ENCODE measurements at regions of chr14 and their contacts with region 1.

Region 1: DNA sequence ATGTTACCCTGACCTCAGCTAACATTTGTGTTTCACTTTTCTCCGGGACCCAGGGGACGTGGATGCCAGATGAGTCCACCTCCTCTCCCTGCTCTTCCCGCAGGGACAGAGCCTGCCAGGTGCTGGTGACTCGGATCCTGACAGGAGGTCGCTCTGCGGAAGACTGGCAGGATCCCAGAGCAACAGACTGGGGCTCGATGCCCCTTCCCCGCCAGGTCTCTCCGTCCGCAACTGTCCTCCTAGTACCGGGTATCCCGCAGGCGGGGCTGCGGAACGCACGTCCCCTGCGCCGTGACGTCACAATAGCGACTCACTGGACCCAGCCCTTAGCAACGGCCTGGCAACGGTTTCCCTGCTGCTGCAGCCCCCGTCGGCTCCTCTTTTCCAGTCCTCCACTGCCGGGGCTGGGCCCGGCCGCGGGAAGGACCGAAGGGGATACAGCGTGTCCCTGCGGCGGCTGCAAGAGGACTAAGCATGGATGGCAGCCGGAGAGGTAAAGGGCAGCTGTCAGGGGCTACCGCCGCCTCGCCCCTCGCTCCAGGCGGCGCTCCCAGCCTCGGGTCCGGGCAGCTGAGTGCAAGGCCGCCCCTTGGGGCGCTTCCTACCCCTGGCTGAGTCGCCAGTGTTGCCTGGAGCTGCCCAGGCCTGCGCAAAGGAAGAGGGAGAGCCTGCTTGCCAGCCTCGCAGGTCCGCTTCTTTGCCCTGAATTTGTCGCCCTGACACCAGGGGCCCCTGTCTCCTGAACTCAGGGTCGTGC is at the start of gene SPATA7:
- DNase-seq: peak; percentile 97
- H3K4me3 ChIP-seq: peak within 1 kb of the TSS; percentile 43 to 93 (median 52)
- H3K27ac ChIP-seq: peak within 1 kb of the TSS; percentile 85 to 91 (median 87)
- H3K4me1 ChIP-seq: peaks cover 17 to 23% of the 10 kb centered on the region in 2 donors
- H3K27me3 ChIP-seq: no peaks in the 10 kb centered on the region
- CTCF ChIP-seq: peak in 1 of 6 experiments; percentile 24
- POLR2A ChIP-seq: peak; percentile 46 to 96
- total RNA-seq, gene SPATA7: 51.0 to 57.6 (median 52.2) TPM

Region 2: GRCh38 chr14:88289234-88289633 is 96.3 kb before region 1 on chr14:
- intact Hi-C with region 1: no loop called
- DNase-seq: no peak
- H3K4me3 ChIP-seq: no peak overlapping the region
- H3K27ac ChIP-seq: no peak overlapping the region
- H3K4me1 ChIP-seq: no peaks in the 10 kb centered on the region
- H3K27me3 ChIP-seq: no peaks in the 10 kb centered on the region
- CTCF ChIP-seq: no peak
- POLR2A ChIP-seq: no peak

Region 3: DNA sequence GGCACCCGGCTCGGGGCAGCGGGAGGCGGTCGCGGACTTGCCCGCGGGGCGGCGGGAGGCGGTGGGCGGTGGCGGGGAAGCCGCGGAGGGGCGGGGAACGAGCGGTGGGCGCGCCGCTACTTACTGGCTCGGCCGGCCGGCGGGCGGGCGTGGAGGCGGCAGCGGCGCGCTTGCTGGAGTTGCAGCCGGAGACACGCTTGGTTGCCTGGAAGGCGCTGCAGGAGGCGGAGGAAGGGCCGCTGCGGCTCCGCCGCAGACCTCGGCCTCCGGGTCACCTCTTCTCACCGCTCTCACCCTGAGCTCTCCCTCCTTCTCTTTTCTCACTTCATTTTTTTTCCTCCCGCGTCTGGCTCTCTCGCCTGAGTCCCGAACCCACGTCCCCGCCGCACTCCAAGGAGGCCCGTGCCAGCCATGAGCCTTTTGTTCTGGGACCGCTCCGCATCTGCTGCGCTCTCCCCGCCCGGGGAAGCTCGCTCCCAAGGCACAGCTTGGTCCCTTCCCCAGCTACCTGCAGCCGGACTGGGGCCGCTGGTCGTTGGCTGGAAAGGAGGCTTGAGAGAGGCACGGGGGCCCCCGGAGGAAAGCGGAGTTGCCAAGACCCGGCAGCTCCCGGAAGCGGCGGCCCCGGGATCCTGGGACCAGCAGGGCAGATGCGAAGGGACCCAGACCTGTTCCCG is 61.9 kb before region 1 on chr14:
- intact Hi-C with region 1: no loop called
- DNase-seq: peak; percentile 42 to 45
- H3K4me3 ChIP-seq: peak overlapping the region in 1 of 3 donors; percentile 21
- H3K27ac ChIP-seq: no peak overlapping the region
- H3K4me1 ChIP-seq: peaks cover 0 to 20% of the 10 kb centered on the region in 2 donors
- H3K27me3 ChIP-seq: no peaks in the 10 kb centered on the region
- CTCF ChIP-seq: no peak
- POLR2A ChIP-seq: no peak

Region 4: GRCh38 chr14:88551094-88551870 is 165.8 kb after region 1 on chr14:
- intact Hi-C with region 1: loop called (anchors 10 kb)
- DNase-seq: peak; percentile 80 to 82
- H3K4me3 ChIP-seq: peak overlapping the region; percentile 31 to 58 (median 37)
- H3K27ac ChIP-seq: peak overlapping the region; percentile 51 to 82 (median 71)
- H3K4me1 ChIP-seq: peaks cover 27 to 44% of the 10 kb centered on the region in 2 donors
- H3K27me3 ChIP-seq: no peaks in the 10 kb centered on the region
- CTCF ChIP-seq: peak in 4 of 6 experiments; percentile 29 to 60 (median 36)
- POLR2A ChIP-seq: peak in 1 of 2 donors; percentile 47

Region 5: DNA sequence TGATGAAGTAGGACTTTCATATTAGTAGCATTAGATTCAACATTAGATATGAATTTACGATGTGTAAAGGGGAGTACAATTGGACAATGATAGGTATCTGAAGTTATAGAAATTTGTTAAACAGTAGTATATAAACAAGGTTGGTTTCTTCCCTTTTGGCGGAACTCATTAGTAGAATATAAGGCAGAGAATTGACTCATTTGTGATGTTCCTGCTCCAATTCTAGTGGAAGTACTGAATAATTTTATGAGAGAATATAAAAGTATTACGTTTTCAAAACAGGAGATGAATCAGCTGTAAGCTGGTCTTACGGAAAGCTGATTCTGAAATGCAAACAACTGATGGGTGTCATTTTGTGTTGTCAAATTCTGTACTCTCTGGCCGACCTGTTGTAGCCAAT is 190.7 kb after region 1 on chr14:
- intact Hi-C with region 1: no loop called
- DNase-seq: no peak
- H3K4me3 ChIP-seq: no peak overlapping the region
- H3K27ac ChIP-seq: no peak overlapping the region
- H3K4me1 ChIP-seq: no peaks in the 10 kb centered on the region
- H3K27me3 ChIP-seq: no peaks in the 10 kb centered on the region
- CTCF ChIP-seq: no peak
- POLR2A ChIP-seq: no peak

Region 6: GRCh38 chr14:89214221-89214936 is 828.9 kb after region 1 on chr14:
- intact Hi-C with region 1: no loop called
- DNase-seq: peak; percentile 97 to 98
- H3K4me3 ChIP-seq: no peak overlapping the region
- H3K27ac ChIP-seq: peak overlapping the region; percentile 58 to 72 (median 66)
- H3K4me1 ChIP-seq: peaks cover 15 to 22% of the 10 kb centered on the region in 2 donors
- H3K27me3 ChIP-seq: no peaks in the 10 kb centered on the region
- CTCF ChIP-seq: peak in 3 of 6 experiments; percentile 15 to 23 (median 19)
- POLR2A ChIP-seq: no peak

Measured in thyroid gland (tissue), 4 donors.